Activated T-helper 1 cell treated with anti-CD3 and anti-CD28 coated beads, Interleukin-12 subunit alpha, Interleukin-12 subunit beta, Interleukin-2, Interleukin-4 antibody, amounts not matched to agents 30 ng/mL and 10 ng/mL and 1 ng/mL, durations not matched to agents 14 hours and 24 hours and 36 hours (primary cell): ENCODE measurements at regions of chr15 and their contacts with region 1.

Region 1: GRCh38 chr15:85543741-85544155 is 163.3 kb downstream of the AKAP13 start:
- DNase-seq: peak; percentile 22
- H3K4me3 Mint-ChIP-seq: peak overlapping the region; percentile 50
- H3K27ac Mint-ChIP-seq: peak overlapping the region; percentile 59
- H3K4me1 Mint-ChIP-seq: peaks cover 83% of the 10 kb centered on the region
- H3K27me3 Mint-ChIP-seq: no peaks in the 10 kb centered on the region

Region 2: DNA sequence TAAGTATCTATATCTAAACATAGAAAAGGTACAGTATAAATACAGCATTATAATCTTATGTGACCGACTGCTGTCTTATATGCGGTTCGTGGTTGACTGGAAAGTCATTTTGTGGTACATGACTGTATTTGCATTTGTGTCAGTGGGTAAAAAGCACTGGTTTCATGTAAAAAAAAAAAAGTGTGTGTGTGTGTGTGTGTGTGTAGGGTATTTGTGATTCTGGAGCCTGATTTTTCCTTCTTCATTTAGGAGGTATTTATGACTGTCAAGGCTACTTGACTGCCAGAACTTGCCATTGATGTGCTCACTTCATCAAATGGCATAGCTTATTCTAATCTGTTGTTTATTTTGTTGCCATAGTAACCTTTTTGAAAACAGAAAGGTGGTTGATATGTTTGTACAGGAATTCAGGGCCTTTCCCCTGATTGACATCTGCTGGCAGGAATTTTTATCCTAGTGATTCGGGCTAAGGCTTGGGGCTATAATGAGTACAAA is 100.1 kb before region 1 on chr15:
- intact Hi-C with region 1: loop called (anchors 5 kb)
- DNase-seq: no peak
- H3K4me3 Mint-ChIP-seq: peak overlapping the region; percentile 6
- H3K27ac Mint-ChIP-seq: peak overlapping the region; percentile 84
- H3K4me1 Mint-ChIP-seq: peaks cover 28% of the 10 kb centered on the region
- H3K27me3 Mint-ChIP-seq: peaks cover 2% of the 10 kb centered on the region

Region 3: DNA sequence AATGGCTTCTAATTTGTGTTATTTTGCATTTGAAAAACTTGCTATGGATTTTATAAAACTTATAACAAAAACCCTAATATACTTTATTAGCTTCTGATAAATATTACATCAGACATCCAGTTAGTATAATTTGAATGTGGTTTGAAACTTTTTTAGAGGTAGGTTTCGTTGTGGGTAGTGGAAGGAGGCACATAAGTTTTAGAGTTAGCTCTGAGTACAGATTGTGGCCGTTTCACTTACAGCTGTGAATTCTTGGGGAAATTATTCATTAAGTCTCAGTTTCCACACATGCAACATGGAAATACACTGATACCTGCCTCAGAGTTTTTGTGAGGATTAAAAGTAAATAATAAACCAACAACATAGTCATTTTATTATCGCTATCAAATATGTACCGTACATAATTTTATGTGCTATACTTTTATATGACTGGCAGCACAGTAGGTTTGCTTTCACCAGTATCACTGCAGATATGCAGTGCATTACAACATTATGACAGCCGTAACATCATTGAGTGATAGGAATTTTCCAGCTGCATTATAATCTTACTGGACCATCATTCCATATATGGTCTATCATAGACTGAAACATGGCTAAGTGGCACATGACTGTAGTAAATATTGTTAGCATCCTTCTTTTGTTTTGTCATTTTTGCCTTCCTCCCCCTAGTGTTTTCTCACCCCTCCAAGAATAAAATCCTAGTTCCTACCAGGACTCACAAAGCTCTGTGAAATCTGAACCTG is 12.3 kb after region 1 on chr15:
- intact Hi-C with region 1: loop called (anchors 1 kb)
- DNase-seq: no peak
- H3K4me3 Mint-ChIP-seq: peak overlapping the region; percentile 8
- H3K27ac Mint-ChIP-seq: peak overlapping the region; percentile 29
- H3K4me1 Mint-ChIP-seq: peaks cover 58% of the 10 kb centered on the region
- H3K27me3 Mint-ChIP-seq: no peaks in the 10 kb centered on the region

Region 4: DNA sequence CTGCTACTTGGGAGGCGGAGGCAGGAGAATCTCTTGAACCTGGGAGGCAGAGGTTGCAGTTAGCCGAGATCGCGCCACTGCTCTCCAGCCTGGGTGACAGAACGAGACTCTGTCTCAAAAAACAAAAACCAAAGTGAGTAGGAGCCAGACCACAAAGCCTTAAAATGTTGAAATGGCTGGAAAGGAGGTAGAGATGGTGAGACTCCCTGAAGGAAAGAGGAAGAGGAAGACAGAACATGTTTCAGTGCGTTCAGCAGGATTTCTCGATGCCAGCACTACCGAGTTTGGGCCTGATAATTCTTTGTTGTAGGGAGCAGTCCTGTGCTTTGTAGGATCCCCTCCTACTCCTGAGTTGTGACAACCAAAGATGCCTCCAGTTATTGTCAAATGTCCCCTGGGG is 26.6 kb after region 1 on chr15:
- intact Hi-C with region 1: no loop called
- DNase-seq: no peak
- H3K4me3 Mint-ChIP-seq: no peak overlapping the region
- H3K27ac Mint-ChIP-seq: no peak overlapping the region
- H3K4me1 Mint-ChIP-seq: peaks cover 20% of the 10 kb centered on the region
- H3K27me3 Mint-ChIP-seq: no peaks in the 10 kb centered on the region

Region 5: DNA sequence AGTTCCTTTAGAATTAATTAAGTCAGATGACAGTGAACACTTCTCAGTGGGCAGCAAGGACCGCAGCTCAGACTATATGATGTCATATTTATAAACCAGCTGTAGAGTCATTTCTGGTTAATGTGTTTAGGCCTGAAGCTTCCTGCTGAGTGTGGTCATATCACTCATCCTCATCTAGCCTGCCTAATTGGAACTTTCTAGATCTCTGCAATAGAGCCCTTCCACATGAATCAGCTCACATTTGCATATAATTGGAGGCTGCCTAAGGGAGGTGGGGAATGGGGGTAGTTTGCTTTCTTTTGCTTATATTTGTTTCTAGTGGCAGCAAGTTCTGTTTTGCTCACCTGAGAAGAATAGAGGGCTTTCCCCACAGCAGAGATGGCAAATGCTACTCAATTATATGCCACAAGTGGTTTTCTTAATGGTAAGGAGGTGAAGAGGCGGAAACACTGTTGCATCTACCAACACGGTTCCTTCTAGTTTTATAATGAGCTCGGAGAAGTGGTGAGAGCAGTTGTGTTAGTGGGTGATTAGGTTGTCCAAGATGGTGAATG is 102.9 kb after region 1 on chr15:
- intact Hi-C with region 1: loop called (anchors 1 kb)
- DNase-seq: peak; percentile 14
- H3K4me3 Mint-ChIP-seq: peak overlapping the region; percentile 30
- H3K27ac Mint-ChIP-seq: peak overlapping the region; percentile 92
- H3K4me1 Mint-ChIP-seq: peaks cover 44% of the 10 kb centered on the region
- H3K27me3 Mint-ChIP-seq: no peaks in the 10 kb centered on the region

Region 6: DNA sequence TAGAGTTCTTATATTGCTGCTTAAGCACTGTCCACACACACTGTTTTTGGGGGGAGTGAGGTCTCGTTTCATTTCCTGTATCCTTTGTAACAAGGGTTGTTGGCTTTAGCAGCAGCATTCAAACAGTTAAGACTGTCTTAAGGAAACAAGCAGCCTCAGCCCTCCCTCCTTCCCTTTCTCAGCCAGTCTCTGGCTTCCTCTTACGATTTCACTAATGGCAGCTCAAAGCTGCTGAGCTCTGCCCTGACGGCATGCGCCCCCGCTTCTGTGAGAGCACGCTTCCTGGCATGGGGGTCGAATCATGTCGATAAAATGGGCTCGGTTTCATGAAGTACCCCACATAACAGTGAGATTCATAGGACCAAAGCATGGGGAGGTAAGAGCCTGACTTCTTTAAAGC is 146.0 kb after region 1 on chr15:
- intact Hi-C with region 1: loop called (anchors 5 kb)
- DNase-seq: peak; percentile 56
- H3K4me3 Mint-ChIP-seq: peak overlapping the region; percentile 96
- H3K27ac Mint-ChIP-seq: peak overlapping the region; percentile 100
- H3K4me1 Mint-ChIP-seq: peaks cover 73% of the 10 kb centered on the region
- H3K27me3 Mint-ChIP-seq: no peaks in the 10 kb centered on the region

Region 7: GRCh38 chr15:85794603-85795336 is 251.0 kb after region 1 on chr15 and contains the start of gene KLHL25:
- intact Hi-C with region 1: loop called (anchors 5 kb)
- DNase-seq: peak; percentile 92
- H3K4me3 Mint-ChIP-seq: peak within 1 kb of the TSS; percentile 91
- H3K27ac Mint-ChIP-seq: peak within 1 kb of the TSS; percentile 83
- H3K4me1 Mint-ChIP-seq: peaks cover 31% of the 10 kb centered on the region
- H3K27me3 Mint-ChIP-seq: peaks cover 4% of the 10 kb centered on the region
- total RNA-seq, gene KLHL25: 10.7 and 11.0 TPM in 2 replicates

Region 8: DNA sequence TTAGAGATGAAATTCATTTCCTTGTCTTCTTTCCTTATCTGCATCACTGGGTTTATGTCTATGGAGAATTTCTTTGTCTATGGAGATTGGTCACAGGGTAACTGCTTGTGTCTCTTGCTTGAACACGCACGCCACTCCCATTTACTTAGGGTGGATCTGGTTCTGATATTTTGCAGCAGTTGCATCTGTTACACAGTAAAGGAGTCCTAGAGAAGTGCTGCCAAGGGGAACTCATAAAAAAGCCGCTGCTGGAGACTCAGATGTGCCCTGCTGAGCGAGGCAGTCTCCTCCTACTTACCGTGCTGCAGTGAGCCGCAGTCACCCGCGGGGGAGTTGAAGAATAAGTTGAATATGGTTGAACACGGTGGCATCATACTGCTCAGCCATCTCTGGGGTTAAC is 356.2 kb after region 1 on chr15:
- intact Hi-C with region 1: no loop called
- DNase-seq: no peak
- H3K4me3 Mint-ChIP-seq: no peak overlapping the region
- H3K27ac Mint-ChIP-seq: no peak overlapping the region
- H3K4me1 Mint-ChIP-seq: no peaks in the 10 kb centered on the region
- H3K27me3 Mint-ChIP-seq: peaks cover 5% of the 10 kb centered on the region